Heart right ventricle (tissue), 16 donors: ENCODE measurements at regions of chr3 and their contacts with region 1.

Region 1: DNA sequence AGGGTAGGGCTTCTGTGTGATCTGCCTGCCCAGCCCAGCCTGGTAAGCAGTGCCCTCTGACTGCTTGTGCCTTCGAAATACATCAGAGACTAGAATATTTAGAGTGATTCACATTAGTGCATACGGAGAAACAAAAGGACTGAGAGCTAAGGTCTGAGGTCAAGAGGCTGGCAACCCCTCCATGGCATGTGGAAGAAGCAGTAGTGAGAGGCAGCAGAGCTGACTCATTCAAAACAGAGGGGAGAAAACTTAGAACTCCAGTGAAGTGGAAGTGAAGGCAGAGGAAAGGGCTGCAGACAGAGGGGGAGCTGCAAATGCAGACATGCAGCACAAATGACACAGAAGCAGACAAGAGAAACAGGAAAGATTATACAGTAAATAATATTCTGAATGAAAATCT is 61.6 kb downstream of the ULK4 start:
- DNase-seq: no peak
- ATAC-seq: no peak
- H3K4me3 ChIP-seq: no peak overlapping the region
- H3K27ac ChIP-seq: peak overlapping the region in 1 of 10 donors; percentile 3
- H3K4me1 ChIP-seq: peaks cover 0 to 22% (median 0%) of the 10 kb centered on the region in 9 donors
- H3K27me3 ChIP-seq: no peaks in the 10 kb centered on the region
- CTCF ChIP-seq: no peak

Region 2: DNA sequence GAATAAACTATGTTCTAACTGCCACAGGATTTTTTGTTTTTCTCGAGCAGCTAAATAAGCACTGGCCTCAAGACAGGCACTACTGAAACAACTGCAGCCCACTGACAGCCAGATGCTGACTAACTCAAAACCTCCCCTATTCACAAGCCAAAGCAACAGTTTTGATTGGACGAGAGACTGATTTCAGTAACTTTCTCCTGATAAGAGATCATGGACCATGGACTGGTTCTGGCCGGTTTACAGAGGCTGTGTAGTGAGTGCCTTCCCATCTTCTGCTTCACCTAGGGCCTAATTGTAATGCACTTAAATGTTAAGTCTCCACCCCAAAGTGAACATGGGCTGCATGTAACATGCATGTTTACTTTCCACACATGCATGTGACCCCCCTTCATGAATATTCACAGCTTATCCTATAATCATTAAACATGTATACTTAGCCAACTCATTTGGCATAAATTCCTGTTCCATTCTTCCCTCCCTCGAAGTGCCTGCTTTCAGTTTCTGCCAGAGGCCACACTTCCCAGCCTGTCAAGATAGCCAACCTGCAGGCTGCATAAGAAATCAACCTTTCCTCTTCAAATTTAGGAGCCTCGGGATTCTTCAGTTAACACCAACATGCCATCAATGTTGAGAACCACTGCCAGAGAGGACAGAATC is 46.6 kb before region 1 on chr3:
- intact Hi-C with region 1: no loop called
- DNase-seq: no peak
- ATAC-seq: no peak
- H3K4me3 ChIP-seq: no peak overlapping the region
- H3K27ac ChIP-seq: no peak overlapping the region
- H3K4me1 ChIP-seq: peaks cover 0 to 3% (median 0%) of the 10 kb centered on the region in 9 donors
- H3K27me3 ChIP-seq: no peaks in the 10 kb centered on the region
- CTCF ChIP-seq: no peak

Region 3: DNA sequence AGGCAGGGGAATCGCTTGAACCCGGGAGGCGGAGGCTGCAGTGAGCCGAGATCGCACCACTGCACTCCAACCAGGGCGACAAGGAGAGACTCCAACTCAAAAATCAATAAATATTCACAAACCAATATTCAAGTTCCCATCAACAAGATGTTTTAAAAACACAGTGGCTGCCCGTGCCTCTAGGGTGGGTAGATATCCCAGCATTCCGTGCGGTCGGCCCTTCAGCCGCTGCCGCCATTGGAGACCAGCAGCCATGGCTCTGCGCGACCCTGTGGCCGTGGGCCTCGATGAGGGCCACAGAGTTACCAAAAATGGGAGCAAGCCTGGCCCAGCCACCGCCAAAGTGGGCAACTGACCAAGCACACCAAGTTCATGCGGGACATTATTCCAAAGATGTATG is 54.9 kb after region 1 on chr3:
- intact Hi-C with region 1: loop called in 1 of 10 experiments (anchors 10 kb)
- DNase-seq: no peak
- ATAC-seq: no peak
- H3K4me3 ChIP-seq: no peak overlapping the region
- H3K27ac ChIP-seq: no peak overlapping the region
- H3K4me1 ChIP-seq: peaks cover 0 to under 1% (median 0%) of the 10 kb centered on the region in 9 donors
- H3K27me3 ChIP-seq: no peaks in the 10 kb centered on the region
- CTCF ChIP-seq: no peak

Region 4: DNA sequence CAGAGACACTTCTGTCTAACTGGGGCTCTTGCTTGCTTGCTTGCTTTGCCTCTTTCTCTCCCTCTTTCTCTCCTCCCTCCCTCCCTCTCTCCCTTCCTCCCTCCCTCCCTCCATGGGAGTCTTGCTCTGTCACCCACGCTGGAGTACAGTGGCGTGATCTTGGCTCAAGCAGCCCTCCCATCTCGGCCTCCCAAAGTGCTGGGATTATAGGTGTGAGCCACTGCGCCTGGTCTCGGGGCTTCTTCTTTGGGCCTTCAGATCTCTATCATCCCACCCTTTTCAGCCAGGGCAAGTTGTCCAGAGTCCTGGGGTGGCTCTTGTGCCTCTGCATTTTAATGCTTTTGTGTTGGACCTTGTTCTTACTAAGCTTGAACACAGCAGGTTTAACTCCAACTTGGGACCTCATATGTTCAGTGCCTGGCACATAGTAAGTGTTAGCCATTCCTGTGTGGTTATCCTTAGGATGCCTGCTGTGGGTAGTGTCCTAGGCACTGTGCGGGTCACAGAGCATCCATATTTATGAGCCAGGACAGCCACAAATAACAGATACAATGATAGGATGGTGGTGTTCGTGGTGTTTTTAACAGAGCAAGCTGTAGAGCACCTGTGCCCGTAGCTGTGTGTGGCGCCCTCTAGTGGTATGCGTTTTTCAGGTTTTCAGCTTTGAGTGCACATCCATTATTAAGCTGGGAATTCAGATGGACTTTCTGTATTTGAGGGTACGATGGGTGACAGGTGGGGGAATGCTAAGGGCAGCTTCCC is 290.6 kb after region 1 on chr3:
- intact Hi-C with region 1: loop called in 8 of 10 experiments (anchors 2 to 10 kb)
- DNase-seq: peak in 1 of 2 donors; percentile 72
- ATAC-seq: peak; percentile 34 to 69 (median 57)
- H3K4me3 ChIP-seq: no peak overlapping the region
- H3K27ac ChIP-seq: peak overlapping the region in 2 of 10 donors; percentile 5 to 67
- H3K4me1 ChIP-seq: peaks cover 0 to 71% (median 44%) of the 10 kb centered on the region in 9 donors
- H3K27me3 ChIP-seq: no peaks in the 10 kb centered on the region
- CTCF ChIP-seq: peak; percentile 79 to 90 (median 82)

Region 5: GRCh38 chr3:42451546-42452230 is 551.4 kb after region 1 on chr3:
- intact Hi-C with region 1: loop called in 4 of 10 experiments (anchors 5 to 10 kb)
- DNase-seq: peak; percentile 16 to 56
- ATAC-seq: peak; percentile 91 to 99 (median 96)
- H3K4me3 ChIP-seq: no peak overlapping the region
- H3K27ac ChIP-seq: peak overlapping the region in 9 of 10 donors; percentile 26 to 87 (median 79)
- H3K4me1 ChIP-seq: peaks cover 0 to 16% (median 13%) of the 10 kb centered on the region in 9 donors
- H3K27me3 ChIP-seq: no peaks in the 10 kb centered on the region
- CTCF ChIP-seq: no peak